ENCODE measurements at regions of chr2 and their contacts with region 1.

Region 1: GRCh38 chr2:119702918-119703401 is 24.0 kb downstream of the TMEM177 start:
- DNase-seq: peak; percentile 44
- H3K4me3 ChIP-seq: no peak overlapping the region
- H3K27ac ChIP-seq: no peak overlapping the region
- H3K4me1 ChIP-seq: no peaks in the 10 kb centered on the region
- H3K27me3 ChIP-seq: no peaks in the 10 kb centered on the region
- CTCF ChIP-seq: peak; percentile 90 to 99

Region 2: GRCh38 chr2:119753041-119753929 is 50.3 kb after region 1 on chr2:
- CTCF ChIA-PET with region 1: no interaction called
- dilution Hi-C with region 1: no loop called
- in situ Hi-C with region 1: no loop called
- intact Hi-C with region 1: loop called (anchors 2 kb)
- DNase-seq: peak; percentile 32
- H3K4me3 ChIP-seq: no peak overlapping the region
- H3K27ac ChIP-seq: no peak overlapping the region
- H3K4me1 ChIP-seq: peaks cover 52% of the 10 kb centered on the region
- H3K27me3 ChIP-seq: no peaks in the 10 kb centered on the region
- CTCF ChIP-seq: peak; percentile 54 to 58